ENCODE measurements at regions of chr1 and their contacts with region 1.

Region 1: GRCh38 chr1:66533804-66534740 is at the start of gene SGIP1:
- DNase-seq: peak; percentile 67 to 82 (median 72)
- ATAC-seq: peak; percentile 84 to 95 (median 93)
- H3K4me3 ChIP-seq: peak within 1 kb of the TSS; percentile 36 to 67 (median 53)
- H3K27ac ChIP-seq: peak within 1 kb of the TSS; percentile 69 to 86 (median 78)
- H3K4me1 ChIP-seq: peaks cover 0 to 46% (median 11%) of the 10 kb centered on the region in 12 donors
- H3K27me3 ChIP-seq: peaks cover 0 to 11% (median 0%) of the 10 kb centered on the region in 9 donors
- CTCF ChIP-seq: no peak
- POLR2A ChIP-seq: peak in 1 of 2 donors; percentile 28
- total RNA-seq, gene SGIP1: 2.1 to 17.3 (median 5.0) TPM

Region 2: DNA sequence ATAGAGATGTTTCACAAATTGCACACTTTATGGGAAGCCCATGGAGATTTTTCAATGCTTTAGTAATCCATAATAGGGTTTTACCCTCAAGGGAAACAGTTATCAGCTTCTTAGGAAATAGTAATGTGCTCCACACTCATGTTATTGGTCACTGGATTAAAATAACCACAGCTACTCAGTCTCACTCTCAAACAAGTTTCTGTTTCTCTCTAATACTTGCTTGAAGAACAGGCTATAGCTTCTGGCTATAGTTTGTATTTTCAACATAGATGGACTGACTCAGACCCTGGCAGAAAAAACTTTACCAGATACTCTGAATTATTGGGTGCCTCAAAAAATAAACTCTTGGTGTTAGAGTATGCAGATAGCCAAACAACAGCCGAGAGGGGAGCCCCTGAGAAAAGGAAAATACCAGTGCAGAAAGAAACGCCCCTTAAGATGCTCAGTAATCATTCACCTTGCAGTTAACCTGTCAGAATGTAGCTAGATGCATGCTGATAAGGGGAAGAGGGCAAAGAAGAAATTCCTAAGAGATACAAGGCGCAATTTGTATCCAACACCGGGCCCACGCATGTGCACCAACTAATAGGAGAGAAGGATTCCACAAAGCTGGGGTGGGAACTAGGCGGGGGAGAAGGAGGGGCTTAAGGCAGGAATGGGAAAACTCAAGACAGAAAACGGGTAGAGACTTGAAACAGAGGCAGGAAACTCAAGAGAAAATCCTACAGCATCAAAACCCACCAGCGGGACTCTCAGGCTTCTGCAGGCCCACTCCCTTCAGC is 771.8 kb before region 1 on chr1:
- intact Hi-C with region 1: no loop called
- DNase-seq: no peak
- ATAC-seq: no peak
- H3K4me3 ChIP-seq: no peak overlapping the region
- H3K27ac ChIP-seq: no peak overlapping the region
- H3K4me1 ChIP-seq: no peaks in the 10 kb centered on the region
- H3K27me3 ChIP-seq: peaks cover 0 to 8% (median 0%) of the 10 kb centered on the region in 9 donors
- CTCF ChIP-seq: no peak
- POLR2A ChIP-seq: no peak

Region 3: DNA sequence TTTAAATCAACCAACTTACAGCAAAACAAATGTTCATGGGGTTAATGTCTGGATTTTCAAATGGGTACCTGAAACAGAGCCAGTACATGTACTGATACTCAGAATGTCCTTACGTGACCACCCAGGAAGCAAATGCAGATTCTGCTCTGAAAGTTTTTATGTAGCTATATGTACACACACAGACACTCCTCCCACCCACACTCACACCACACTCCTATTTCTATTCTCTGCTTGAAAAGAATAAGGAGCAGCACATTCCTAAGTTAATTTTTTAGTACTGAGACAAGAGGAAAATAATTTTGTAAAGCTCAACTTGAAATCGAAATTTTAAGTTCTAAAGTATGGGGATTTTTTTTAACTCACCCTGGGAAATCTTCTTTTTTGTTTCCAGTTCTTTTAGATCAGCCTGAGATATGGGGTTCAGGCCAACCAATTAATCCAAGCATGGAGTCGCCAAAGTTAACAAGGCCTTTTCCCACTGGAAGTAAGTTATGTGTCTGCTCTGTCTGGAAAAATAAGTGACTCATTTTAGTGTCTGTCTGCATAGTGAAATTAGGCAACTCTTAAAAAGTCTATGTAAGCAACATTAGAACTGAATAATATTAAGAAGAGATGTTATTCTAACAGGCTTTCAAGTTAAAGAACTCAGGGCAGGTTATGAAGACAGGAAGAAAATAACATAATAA is 142.7 kb after region 1 on chr1:
- intact Hi-C with region 1: loop called in 2 of 10 experiments (anchors 5 to 10 kb)
- DNase-seq: no peak
- ATAC-seq: peak; percentile 67 to 95 (median 78)
- H3K4me3 ChIP-seq: no peak overlapping the region
- H3K27ac ChIP-seq: peak overlapping the region in 11 of 12 donors; percentile 17 to 91 (median 61)
- H3K4me1 ChIP-seq: peaks cover 0 to 42% (median 12%) of the 10 kb centered on the region in 12 donors
- H3K27me3 ChIP-seq: no peaks in the 10 kb centered on the region
- CTCF ChIP-seq: no peak
- POLR2A ChIP-seq: no peak

Region 4: DNA sequence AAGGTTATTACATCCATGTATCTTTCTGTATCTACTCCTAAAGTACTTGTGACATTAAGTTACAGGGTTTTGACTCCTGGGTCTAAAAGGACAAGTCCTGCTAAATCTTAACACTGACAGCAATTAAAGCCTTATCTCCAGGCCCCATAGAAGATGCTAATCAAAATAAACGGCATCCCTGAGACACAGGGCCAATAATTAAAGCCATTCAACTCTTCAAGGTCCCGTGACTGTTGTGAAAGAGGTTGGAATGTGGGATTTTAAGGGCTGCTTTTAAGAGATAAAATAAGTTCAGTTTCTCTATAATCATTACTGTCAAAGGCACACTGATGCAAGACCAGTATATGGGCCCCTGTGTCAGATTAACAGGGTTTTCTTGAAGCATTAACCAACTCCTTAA is 382.2 kb after region 1 on chr1:
- intact Hi-C with region 1: no loop called
- DNase-seq: no peak
- ATAC-seq: no peak
- H3K4me3 ChIP-seq: no peak overlapping the region
- H3K27ac ChIP-seq: no peak overlapping the region
- H3K4me1 ChIP-seq: peaks cover 0 to 4% (median 0%) of the 10 kb centered on the region in 12 donors
- H3K27me3 ChIP-seq: no peaks in the 10 kb centered on the region
- CTCF ChIP-seq: no peak
- POLR2A ChIP-seq: no peak

Measured in heart left ventricle (tissue), 16 donors.